ENCODE measurements at regions of chr14 and their contacts with region 1.

Region 1: GRCh38 chr14:68283378-68284123 is 464.0 kb downstream of the RAD51B start:
- DNase-seq: peak; percentile 22 to 78 (median 60)
- ATAC-seq: peak; percentile 66 to 73
- H3K4me3 Mint-ChIP-seq: peak overlapping the region; percentile 49 to 82 (median 68)
- H3K27ac Mint-ChIP-seq: peak overlapping the region; percentile 94 to 99 (median 98)
- H3K4me1 Mint-ChIP-seq: peaks cover 40 to 97% (median 86%) of the 10 kb centered on the region in 4 donors
- H3K27me3 Mint-ChIP-seq: no peaks in the 10 kb centered on the region

Region 2: GRCh38 chr14:68157971-68158371 is 125.6 kb before region 1 on chr14:
- POLR2A ChIA-PET with region 1: no interaction called
- DNase-seq: no peak
- ATAC-seq: no peak
- H3K4me3 Mint-ChIP-seq: no peak overlapping the region
- H3K27ac Mint-ChIP-seq: no peak overlapping the region
- H3K4me1 Mint-ChIP-seq: no peaks in the 10 kb centered on the region
- H3K27me3 Mint-ChIP-seq: no peaks in the 10 kb centered on the region

Region 3: DNA sequence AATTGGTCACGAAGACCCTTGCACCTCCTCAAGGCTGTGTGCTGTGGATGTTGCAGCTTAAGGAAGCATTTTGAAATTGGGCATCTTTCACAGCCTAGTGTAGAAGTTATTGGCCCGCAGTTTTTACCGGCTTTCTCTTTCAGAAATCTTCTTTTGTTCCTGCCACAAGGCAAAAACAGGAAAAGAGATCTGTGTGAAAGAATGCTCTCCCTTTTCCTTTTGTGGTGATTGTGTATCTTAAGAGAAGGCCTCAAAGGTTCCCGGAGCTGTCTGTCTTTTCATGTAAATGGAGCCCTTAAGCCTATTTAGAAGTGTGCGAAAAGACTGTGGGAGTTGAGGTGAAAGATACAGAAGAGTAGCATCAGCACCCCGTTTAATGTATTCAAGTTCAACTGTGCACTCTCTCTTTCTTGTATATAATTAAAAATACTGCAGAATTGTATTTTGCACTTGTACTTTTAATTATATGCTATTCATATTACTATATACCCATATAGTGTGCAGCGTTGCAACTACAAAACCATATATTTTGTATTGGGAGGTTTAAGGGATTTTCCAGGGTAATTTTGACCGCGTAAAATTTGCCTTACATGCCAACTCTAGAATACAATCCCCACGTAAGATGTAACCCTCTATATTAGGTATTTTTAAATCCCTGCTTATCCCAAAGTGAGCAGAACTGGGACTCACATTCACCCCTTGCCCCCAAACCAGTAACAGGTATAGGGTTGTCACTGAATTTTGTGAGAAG is 22.3 kb before region 1 on chr14:
- POLR2A ChIA-PET with region 1: interaction called, 31 read pairs
- DNase-seq: peak in 2 of 10 donors; percentile 21 to 25
- ATAC-seq: peak; percentile 52 to 79
- H3K4me3 Mint-ChIP-seq: peak overlapping the region; percentile 22 to 81 (median 65)
- H3K27ac Mint-ChIP-seq: peak overlapping the region; percentile 62 to 95 (median 92)
- H3K4me1 Mint-ChIP-seq: peaks cover 39 to 73% (median 62%) of the 10 kb centered on the region in 4 donors
- H3K27me3 Mint-ChIP-seq: no peaks in the 10 kb centered on the region

Region 4: DNA sequence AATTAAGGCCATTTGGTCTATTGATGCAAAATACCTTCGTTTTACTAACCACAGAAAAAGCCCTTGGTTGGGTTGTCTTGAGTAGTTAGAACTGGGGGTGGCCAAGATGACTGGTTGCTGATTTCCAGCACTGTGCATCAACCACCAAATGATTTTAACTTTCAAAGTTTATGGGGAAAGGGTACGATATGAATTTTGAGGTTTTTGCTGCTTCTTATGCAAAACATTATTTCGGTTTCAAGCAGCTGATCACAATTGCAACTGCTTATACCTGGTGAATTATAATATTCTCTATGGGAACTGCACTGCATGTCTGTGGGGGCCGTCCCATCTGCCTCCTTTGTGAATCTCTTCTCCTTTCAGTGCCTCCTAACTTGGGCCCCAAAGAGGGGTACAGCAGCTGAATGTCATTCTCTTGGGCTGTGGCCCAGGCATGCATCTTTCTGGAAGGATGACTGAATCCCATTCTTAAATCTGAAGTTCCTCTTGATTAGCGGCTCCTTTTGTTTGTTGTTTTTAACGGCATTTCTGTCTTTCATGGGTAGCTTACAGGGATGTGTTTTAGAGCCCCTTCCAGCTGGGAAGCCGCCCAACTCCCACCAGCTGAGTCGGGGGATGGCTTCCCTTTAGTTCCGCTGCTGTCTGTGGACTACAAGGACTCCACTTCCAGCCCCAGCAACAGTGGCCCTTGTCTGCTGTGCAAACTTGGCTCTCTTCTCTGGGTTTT is 29.5 kb after region 1 on chr14:
- POLR2A ChIA-PET with region 1: no interaction called
- DNase-seq: no peak
- ATAC-seq: no peak
- H3K4me3 Mint-ChIP-seq: no peak overlapping the region
- H3K27ac Mint-ChIP-seq: peak overlapping the region in 4 of 10 donors; percentile 6 to 65 (median 13)
- H3K4me1 Mint-ChIP-seq: peaks cover 7 to 60% (median 13%) of the 10 kb centered on the region in 4 donors
- H3K27me3 Mint-ChIP-seq: no peaks in the 10 kb centered on the region

Region 5: GRCh38 chr14:68377459-68377858 is 93.9 kb after region 1 on chr14:
- POLR2A ChIA-PET with region 1: interaction called, 46 read pairs
- DNase-seq: no peak
- ATAC-seq: peak in 1 of 2 donors; percentile 31
- H3K4me3 Mint-ChIP-seq: peak overlapping the region in 9 of 10 donors; percentile 20 to 71 (median 63)
- H3K27ac Mint-ChIP-seq: peak overlapping the region; percentile 61 to 92 (median 85)
- H3K4me1 Mint-ChIP-seq: peaks cover 46 to 77% (median 67%) of the 10 kb centered on the region in 4 donors
- H3K27me3 Mint-ChIP-seq: no peaks in the 10 kb centered on the region

Region 6: DNA sequence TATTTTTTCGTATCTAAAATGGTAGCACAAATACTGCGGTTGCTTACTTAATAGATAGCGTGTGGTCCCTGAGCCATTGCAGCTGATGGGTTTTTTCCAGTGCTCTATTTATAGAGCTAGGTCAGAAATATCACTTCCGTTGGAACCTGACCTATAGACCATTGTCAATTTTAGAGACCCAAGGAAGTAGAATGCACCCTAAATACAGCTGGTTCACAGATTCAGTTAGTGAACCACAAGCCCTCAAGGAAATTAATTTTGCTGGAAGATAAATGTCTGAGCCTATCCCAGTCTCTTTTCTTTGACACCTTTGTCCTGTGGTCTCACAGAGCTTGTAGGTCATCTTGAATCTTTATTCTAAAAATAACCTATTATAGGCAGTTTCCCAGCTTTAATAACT is 118.3 kb after region 1 on chr14:
- POLR2A ChIA-PET with region 1: no interaction called
- DNase-seq: no peak
- ATAC-seq: no peak
- H3K4me3 Mint-ChIP-seq: no peak overlapping the region
- H3K27ac Mint-ChIP-seq: peak overlapping the region in 3 of 10 donors; percentile 46 to 81 (median 54)
- H3K4me1 Mint-ChIP-seq: peaks cover 19 to 89% (median 39%) of the 10 kb centered on the region in 4 donors
- H3K27me3 Mint-ChIP-seq: no peaks in the 10 kb centered on the region

Region 7: DNA sequence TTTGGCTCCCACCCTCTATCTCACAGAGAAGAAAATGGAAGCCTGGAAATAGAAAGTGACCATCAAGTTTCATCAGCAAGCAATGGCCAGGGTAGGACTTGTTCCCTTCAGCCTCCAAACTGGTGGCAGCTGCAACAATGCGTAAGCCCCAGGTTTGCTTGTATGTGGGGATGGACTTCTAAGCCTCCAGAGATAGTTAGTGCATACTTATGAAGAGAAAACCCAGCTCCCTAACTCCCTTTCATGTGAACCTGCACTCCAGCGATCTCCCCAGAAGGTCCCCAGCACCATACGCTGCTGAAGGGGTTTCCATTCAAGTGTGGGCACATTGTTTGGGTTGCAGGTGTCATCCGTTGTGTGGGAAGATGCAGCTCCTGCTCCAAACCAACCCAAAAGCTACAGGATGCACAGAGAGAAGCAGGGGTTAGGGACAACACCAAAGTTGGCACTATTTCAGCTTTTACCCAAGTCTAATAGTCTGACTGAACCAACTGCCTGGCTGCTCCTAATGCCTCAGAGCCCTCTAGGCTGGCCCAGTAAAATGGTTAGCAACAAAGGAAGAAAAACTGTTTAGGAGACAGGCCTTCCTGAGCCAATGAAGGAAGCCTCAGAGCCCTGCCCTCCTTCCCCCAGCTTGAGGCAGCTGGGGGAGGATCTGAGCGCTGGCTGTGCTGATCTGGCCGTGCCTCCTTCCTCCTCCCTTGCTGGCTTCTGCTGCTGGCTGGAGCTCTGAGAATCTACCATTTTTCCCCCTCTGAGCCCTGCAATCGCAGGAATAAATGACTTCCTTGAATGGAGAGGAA is 497.0 kb after region 1 on chr14:
- POLR2A ChIA-PET with region 1: interaction called, 150 read pairs
- DNase-seq: peak in 4 of 10 donors; percentile 31 to 47 (median 34)
- ATAC-seq: peak; percentile 16 to 17
- H3K4me3 Mint-ChIP-seq: peak overlapping the region; percentile 75 to 89 (median 84)
- H3K27ac Mint-ChIP-seq: peak overlapping the region; percentile 85 to 99 (median 93)
- H3K4me1 Mint-ChIP-seq: peaks cover 39 to 87% (median 80%) of the 10 kb centered on the region in 4 donors
- H3K27me3 Mint-ChIP-seq: no peaks in the 10 kb centered on the region

Measured in naive thymus-derived CD8-positive, alpha-beta T cell (primary cell).